OCI-LY7 (cell line): ENCODE measurements at regions of chr1 and their contacts with region 1.

Region 1: GRCh38 chr1:89483010-89483756 is 41.4 kb upstream of the LRRC8B start:
- DNase-seq: peak; percentile 85
- H3K4me3 ChIP-seq: no peak overlapping the region
- H3K27ac ChIP-seq: no peak overlapping the region
- H3K4me1 ChIP-seq: no peaks in the 10 kb centered on the region
- CTCF ChIP-seq: peak; percentile 94

Region 2: DNA sequence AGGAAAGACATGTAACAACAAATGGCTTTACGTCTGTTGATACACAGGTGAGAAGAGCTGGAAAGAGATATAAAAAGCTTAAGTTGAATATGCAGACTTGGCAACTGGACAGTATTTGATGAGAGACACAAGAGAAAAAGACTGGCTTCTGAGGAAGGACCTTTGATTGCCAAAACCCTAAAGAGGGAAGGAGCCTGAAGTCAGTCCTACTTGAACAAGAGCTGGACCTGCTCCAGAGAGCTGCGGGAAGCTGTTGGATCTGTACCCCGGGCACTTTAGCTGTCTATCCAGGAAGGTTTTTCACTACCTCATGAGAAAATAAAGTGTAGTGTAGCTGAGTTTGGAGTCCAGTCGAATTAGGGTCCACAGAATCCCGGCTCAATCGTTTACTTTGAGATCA is 16.1 kb after region 1 on chr1:
- CTCF ChIA-PET with region 1: no interaction called
- POLR2A ChIA-PET with region 1: no interaction called
- intact Hi-C with region 1: no loop called
- DNase-seq: no peak
- H3K4me3 ChIP-seq: no peak overlapping the region
- H3K27ac ChIP-seq: no peak overlapping the region
- H3K4me1 ChIP-seq: no peaks in the 10 kb centered on the region
- CTCF ChIP-seq: no peak

Region 3: GRCh38 chr1:89598450-89599331 is 115.5 kb after region 1 on chr1:
- CTCF ChIA-PET with region 1: no interaction called
- POLR2A ChIA-PET with region 1: no interaction called
- intact Hi-C with region 1: loop called (anchors 1 kb)
- DNase-seq: peak; percentile 50
- H3K4me3 ChIP-seq: no peak overlapping the region
- H3K27ac ChIP-seq: no peak overlapping the region
- H3K4me1 ChIP-seq: no peaks in the 10 kb centered on the region
- CTCF ChIP-seq: peak; percentile 89

Region 4: DNA sequence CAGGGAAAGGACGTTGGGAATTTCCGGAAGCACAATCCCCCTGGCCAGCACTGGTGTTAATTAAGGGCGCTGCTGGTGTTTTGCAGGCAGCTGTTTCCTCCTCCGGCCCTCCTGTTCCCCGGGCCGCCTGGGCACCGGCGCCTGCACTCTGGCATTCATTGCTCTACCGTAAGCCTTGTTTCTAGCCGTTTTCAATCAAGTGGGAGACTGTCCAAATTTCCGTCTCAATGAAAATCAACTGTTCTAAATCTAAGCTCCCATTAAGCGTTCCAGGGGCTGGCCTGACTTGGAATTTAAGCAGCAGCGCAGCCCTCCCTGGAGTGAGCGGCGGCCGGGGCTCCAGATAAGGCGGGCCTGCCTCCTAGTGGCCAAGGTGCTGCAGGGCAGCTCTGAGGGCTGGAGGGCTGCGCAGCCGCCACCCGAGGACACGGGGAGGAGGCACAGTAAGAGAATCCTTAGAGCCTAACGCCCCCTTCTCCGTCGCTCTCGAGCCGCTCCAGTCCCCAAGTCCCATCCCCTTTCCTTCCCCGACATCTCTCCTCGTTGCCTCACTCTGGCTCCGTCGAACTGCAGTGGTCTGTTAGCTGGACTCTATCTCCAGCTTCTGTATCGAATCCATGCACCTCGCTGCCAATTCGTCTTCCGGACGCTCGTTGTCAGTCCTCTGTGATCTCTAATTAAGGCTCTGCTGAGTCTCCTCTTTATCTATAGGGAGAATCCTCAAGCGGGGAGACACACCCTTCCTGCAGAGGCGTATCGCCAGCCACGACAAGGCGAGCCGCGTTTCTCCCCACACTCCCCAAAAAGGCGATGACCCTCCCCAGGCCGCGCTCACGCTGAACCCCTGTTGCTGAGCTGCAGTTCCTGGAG is 279.8 kb after region 1 on chr1:
- CTCF ChIA-PET with region 1: interaction called, 6 read pairs
- POLR2A ChIA-PET with region 1: no interaction called
- intact Hi-C with region 1: loop called (anchors 1 kb)
- DNase-seq: peak; percentile 87
- H3K4me3 ChIP-seq: peak overlapping the region; percentile 37
- H3K27ac ChIP-seq: no peak overlapping the region
- H3K4me1 ChIP-seq: peaks cover 16% of the 10 kb centered on the region
- CTCF ChIP-seq: peak; percentile 96

Region 5: GRCh38 chr1:89987170-89987819 is 504.1 kb after region 1 on chr1:
- CTCF ChIA-PET with region 1: no interaction called
- POLR2A ChIA-PET with region 1: no interaction called
- intact Hi-C with region 1: loop called (anchors 10 kb)
- DNase-seq: peak; percentile 81
- H3K4me3 ChIP-seq: no peak overlapping the region
- H3K27ac ChIP-seq: no peak overlapping the region
- H3K4me1 ChIP-seq: peaks cover 8% of the 10 kb centered on the region
- CTCF ChIP-seq: peak; percentile 96